ENCODE measurements at regions of chr9 and their contacts with region 1.

Region 1: GRCh38 chr9:95127249-95128176 is 190.0 kb downstream of the FANCC start:
- DNase-seq: peak; percentile 90
- ATAC-seq: peak; percentile 82
- H3K4me3 Mint-ChIP-seq: peak overlapping the region; percentile 63
- H3K27ac Mint-ChIP-seq: no peak overlapping the region
- H3K4me1 Mint-ChIP-seq: peaks cover 70% of the 10 kb centered on the region
- H3K27me3 Mint-ChIP-seq: no peaks in the 10 kb centered on the region
- CTCF ChIP-seq: peak; percentile 87

Region 2: GRCh38 chr9:94826644-94827410 is 300.7 kb before region 1 on chr9:
- CTCF ChIA-PET with region 1: interaction called, 11 read pairs
- POLR2A ChIA-PET with region 1: no interaction called
- DNase-seq: no peak
- ATAC-seq: no peak
- H3K4me3 Mint-ChIP-seq: no peak overlapping the region
- H3K27ac Mint-ChIP-seq: no peak overlapping the region
- H3K4me1 Mint-ChIP-seq: peaks cover 30% of the 10 kb centered on the region
- H3K27me3 Mint-ChIP-seq: peaks cover 45% of the 10 kb centered on the region
- CTCF ChIP-seq: no peak

Region 3: DNA sequence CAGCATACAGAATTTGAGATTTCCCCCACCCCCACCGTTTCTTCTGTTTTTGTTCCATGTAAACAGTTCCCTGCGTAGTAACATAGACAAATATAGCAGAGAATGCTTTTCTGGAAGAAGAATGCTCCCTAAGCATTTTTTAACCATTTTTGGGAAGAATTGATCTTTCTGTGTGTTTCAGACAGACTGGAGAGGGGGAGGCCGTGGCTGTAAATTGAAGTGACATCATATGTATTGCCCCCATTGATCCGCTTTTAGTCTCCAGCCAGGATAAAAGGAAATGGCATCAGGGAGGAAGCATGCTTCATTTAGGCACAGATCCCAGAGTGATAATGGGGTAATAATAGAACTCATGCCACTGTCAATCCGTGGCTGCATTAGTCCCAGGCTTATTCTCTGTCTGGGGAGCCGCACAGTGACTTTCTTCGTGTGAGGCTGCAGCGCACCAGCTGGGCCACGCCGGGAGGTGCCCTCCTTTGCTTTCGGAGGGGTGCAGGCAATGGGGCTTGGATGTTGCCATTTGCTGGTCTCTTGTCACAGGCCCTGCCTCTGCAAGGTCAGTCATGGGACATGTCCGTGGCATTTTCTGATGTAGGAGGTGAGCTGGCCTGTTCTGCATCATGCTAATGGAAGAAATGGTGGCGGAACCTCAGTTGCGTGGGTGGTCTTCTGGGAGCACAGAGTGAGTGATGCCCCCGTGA is 71.5 kb before region 1 on chr9:
- CTCF ChIA-PET with region 1: interaction called, 13 read pairs
- POLR2A ChIA-PET with region 1: no interaction called
- DNase-seq: no peak
- ATAC-seq: no peak
- H3K4me3 Mint-ChIP-seq: no peak overlapping the region
- H3K27ac Mint-ChIP-seq: no peak overlapping the region
- H3K4me1 Mint-ChIP-seq: peaks cover 31% of the 10 kb centered on the region
- H3K27me3 Mint-ChIP-seq: no peaks in the 10 kb centered on the region
- CTCF ChIP-seq: no peak

Region 4: DNA sequence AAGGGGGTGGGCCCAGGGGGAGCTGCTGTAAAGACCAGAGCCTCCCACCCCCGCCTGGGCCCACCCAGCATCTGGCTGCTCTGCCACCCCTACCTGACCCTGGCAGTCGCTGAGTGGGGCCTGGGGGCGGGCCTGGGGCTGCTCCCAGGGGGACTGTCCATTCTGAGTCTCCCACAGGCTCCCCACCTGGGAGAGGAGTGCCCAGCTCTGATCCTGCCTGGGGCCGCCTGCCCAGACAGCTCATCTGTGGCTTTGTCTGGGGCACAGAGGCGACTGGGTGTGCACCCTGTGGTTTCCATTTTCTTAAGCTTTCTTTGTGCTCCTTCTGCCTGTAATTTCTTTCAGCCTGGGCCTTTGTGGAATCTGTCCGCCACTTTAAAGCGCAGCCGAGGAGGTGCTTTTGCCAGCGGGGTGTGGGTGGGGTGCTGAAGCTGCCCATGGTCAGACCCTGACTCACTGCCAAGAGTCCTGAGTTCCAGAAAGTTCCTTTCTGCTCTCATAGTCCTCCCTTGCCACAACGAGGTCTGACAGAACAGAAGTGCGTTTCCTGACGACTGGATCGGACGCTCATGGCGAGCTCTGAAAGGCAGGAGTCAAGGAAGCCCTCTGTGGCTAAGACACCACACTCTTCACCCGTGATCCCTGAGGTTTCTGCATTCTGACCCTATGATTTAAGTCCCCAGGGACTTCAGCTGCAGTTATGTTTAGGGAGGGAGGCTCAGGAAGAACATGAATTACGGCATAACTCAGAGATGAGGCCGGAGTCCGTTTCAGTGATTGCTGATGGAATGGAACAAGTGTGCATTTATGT is 35.0 kb before region 1 on chr9:
- CTCF ChIA-PET with region 1: interaction called, 24 read pairs
- POLR2A ChIA-PET with region 1: no interaction called
- DNase-seq: no peak
- ATAC-seq: peak; percentile 43
- H3K4me3 Mint-ChIP-seq: no peak overlapping the region
- H3K27ac Mint-ChIP-seq: peak overlapping the region; percentile 25
- H3K4me1 Mint-ChIP-seq: peaks cover 41% of the 10 kb centered on the region
- H3K27me3 Mint-ChIP-seq: no peaks in the 10 kb centered on the region
- CTCF ChIP-seq: no peak

Region 5: DNA sequence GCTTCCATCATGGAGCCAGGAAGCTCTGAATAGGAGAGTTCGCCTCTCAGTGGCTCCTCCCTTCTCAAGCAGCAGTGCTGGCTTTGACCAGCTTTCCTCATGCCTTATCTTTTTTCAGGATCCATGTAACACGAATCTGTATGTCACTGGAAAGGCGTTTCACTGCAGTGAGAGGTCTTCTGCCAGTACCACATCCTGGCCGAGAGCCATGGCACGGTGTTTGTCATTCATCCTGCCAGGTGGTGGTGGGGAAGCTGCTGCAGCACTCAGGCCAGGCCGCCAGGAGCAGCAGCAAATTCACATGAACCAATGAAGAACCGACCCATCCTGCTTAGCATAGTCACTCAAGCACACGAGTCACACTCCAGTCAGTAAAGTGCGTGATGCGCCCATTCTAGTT is 11.0 kb after region 1 on chr9:
- CTCF ChIA-PET with region 1: interaction called, 26 read pairs
- POLR2A ChIA-PET with region 1: no interaction called
- DNase-seq: peak; percentile 60
- ATAC-seq: peak; percentile 92
- H3K4me3 Mint-ChIP-seq: no peak overlapping the region
- H3K27ac Mint-ChIP-seq: no peak overlapping the region
- H3K4me1 Mint-ChIP-seq: peaks cover 25% of the 10 kb centered on the region
- H3K27me3 Mint-ChIP-seq: no peaks in the 10 kb centered on the region
- CTCF ChIP-seq: no peak

Region 6: DNA sequence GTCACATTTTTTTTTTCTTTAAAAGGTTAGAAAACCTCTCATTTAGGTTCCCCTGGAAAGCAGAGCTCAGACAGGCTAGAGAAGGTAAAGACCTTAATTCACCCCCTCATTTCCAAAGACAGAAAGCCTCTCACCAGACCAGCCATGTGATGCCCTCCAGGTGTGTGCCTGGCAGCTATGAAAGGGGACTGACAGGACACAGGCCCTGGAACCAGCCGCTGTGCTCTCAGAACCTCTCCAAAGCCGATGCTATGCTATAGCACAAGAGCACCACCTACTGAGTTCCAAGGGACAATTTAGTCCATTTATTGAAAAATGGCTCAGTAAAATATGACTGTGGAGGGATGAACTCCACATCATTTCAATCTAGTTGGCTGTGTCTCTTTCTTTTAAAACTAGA is 141.2 kb after region 1 on chr9:
- CTCF ChIA-PET with region 1: interaction called, 10 read pairs
- POLR2A ChIA-PET with region 1: no interaction called
- DNase-seq: peak; percentile 32
- ATAC-seq: peak; percentile 75
- H3K4me3 Mint-ChIP-seq: no peak overlapping the region
- H3K27ac Mint-ChIP-seq: no peak overlapping the region
- H3K4me1 Mint-ChIP-seq: peaks cover 32% of the 10 kb centered on the region
- H3K27me3 Mint-ChIP-seq: no peaks in the 10 kb centered on the region
- CTCF ChIP-seq: no peak

Measured in WTC11 (cell line).